Motor neuron (in vitro differentiated cells): ENCODE measurements at regions of chr6 and their contacts with region 1.

Region 1: GRCh38 chr6:18496462-18496861 is 109.3 kb downstream of the RNF144B start:
- ATAC-seq: no peak
- H3K4me3 ChIP-seq: no peak overlapping the region
- H3K27ac ChIP-seq: no peak overlapping the region
- H3K4me1 ChIP-seq: peaks cover 0 to 2% of the 10 kb centered on the region in 2 donors

Region 2: GRCh38 chr6:18330548-18331081 is 165.8 kb before region 1 on chr6:
- in situ Hi-C with region 1: loop called in 4 of 9 experiments (anchors 5 to 25 kb)
- ATAC-seq: no peak
- H3K4me3 ChIP-seq: no peak overlapping the region
- H3K27ac ChIP-seq: no peak overlapping the region
- H3K4me1 ChIP-seq: peaks cover 0 to under 1% of the 10 kb centered on the region in 2 donors

Region 3: DNA sequence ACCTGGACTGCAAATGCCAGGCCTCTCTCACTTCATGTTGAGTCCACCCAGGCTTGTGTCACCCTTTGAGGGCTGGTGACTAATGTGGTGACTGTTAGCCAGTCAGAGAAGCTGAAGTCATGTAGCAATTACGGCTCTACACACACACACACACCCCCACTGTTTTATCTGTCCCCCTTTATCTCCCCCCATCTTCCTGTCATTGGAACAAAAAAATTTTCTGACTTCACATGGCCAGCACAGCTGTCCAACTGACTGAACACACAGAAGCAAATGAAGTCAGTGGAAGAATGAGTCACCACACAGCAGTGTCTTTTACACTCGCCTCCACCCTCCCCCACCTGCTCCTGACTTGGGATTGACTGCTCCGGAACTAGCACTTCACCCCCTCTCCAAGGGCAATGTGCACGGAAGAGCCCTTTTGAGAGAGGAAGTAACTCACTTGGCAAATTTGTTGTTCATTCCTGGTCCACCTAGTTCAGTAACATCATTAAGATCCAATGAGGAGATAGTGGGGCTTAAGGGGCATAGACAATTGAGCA is 88.6 kb after region 1 on chr6:
- in situ Hi-C with region 1: no loop called
- ATAC-seq: peak in 7 of 8 experiments; percentile 93 to 97 (median 97)
- H3K4me3 ChIP-seq: no peak overlapping the region
- H3K27ac ChIP-seq: peak overlapping the region in 1 of 2 donors; percentile 20
- H3K4me1 ChIP-seq: peaks cover 7 to 12% of the 10 kb centered on the region in 2 donors

Region 4: GRCh38 chr6:18990059-18990978 is 493.9 kb after region 1 on chr6:
- in situ Hi-C with region 1: no loop called
- ATAC-seq: peak in 6 of 8 experiments; percentile 58 to 100 (median 99)
- H3K4me3 ChIP-seq: no peak overlapping the region
- H3K27ac ChIP-seq: no peak overlapping the region
- H3K4me1 ChIP-seq: peaks cover 3 to 7% of the 10 kb centered on the region in 2 donors